ENCODE measurements at regions of chr2 and their contacts with region 1.

Region 1: DNA sequence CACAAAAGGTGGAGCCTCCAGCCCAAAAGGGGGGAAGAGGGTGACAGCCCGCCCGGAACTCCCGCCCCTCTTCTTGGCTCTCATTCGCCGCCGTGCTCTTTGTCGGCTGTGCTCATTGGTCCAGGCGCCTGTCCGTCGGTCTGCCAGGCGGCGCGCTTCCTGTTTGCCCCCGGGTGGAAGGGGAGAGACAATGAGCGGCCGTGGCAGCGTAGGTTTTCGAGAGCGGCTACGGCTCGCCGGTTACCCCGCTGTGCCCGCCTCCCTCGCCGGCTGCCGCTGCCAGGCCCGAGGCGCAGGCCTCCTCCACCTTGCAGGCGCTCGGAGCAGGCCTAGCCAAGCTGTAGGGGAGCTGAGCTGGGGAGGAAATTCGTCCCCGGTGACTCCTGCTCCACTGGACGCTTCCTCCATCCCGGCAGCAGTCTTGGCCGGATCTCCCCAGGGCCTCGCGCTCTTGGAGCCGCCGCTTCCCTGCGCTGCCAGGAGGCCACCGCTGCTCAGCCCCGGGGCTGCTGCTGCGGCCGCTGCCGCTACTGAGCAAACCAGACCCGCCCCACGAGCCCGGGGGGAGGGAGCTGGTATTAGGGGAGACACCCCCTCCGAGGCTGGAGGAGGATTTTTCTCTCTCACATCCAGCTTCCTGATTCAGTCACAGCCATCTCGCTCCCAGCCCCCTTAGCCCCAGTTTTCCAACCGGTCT is at the start of gene SP3:
- DNase-seq: peak; percentile 97
- ATAC-seq: peak; percentile 62
- H3K4me3 ChIP-seq: peak within 1 kb of the TSS; percentile 84 to 98 (median 92)
- H3K4me3 Mint-ChIP-seq: peak within 1 kb of the TSS; percentile 93
- H3K27ac ChIP-seq: peak within 1 kb of the TSS; percentile 94 to 98
- H3K27ac Mint-ChIP-seq: peak within 1 kb of the TSS; percentile 95
- H3K4me1 ChIP-seq: peaks cover 24 to 28% of the 10 kb centered on the region in 2 donors
- H3K4me1 Mint-ChIP-seq: peaks cover 32% of the 10 kb centered on the region
- H3K27me3 ChIP-seq: no peaks in the 10 kb centered on the region
- H3K27me3 Mint-ChIP-seq: no peaks in the 10 kb centered on the region
- CTCF ChIP-seq: no peak
- total RNA-seq, gene SP3: 152 and 164 TPM in 2 replicates

Region 2: GRCh38 chr2:173874894-173875237 is 90.6 kb before region 1 on chr2:
- CTCF ChIA-PET with region 1: no interaction called
- POLR2A ChIA-PET with region 1: interaction called, 3 read pairs
- intact Hi-C with region 1: loop called (anchors 2 kb)
- DNase-seq: peak; percentile 85
- ATAC-seq: peak; percentile 99
- H3K4me3 ChIP-seq: peak overlapping the region in 1 of 5 experiments; percentile 3
- H3K4me3 Mint-ChIP-seq: peak overlapping the region; percentile 89
- H3K27ac ChIP-seq: no peak overlapping the region
- H3K27ac Mint-ChIP-seq: peak overlapping the region; percentile 50
- H3K4me1 ChIP-seq: peaks cover 29 to 32% of the 10 kb centered on the region in 2 donors
- H3K4me1 Mint-ChIP-seq: peaks cover 31% of the 10 kb centered on the region
- H3K27me3 ChIP-seq: peaks cover 0 to 5% (median 1%) of the 10 kb centered on the region in 4 experiments
- H3K27me3 Mint-ChIP-seq: peaks cover 23% of the 10 kb centered on the region
- CTCF ChIP-seq: no peak

Region 3: GRCh38 chr2:173922760-173923159 is 42.7 kb before region 1 on chr2:
- CTCF ChIA-PET with region 1: no interaction called
- POLR2A ChIA-PET with region 1: no interaction called
- intact Hi-C with region 1: loop called (anchors 2 kb)
- DNase-seq: no peak
- ATAC-seq: no peak
- H3K4me3 ChIP-seq: no peak overlapping the region
- H3K4me3 Mint-ChIP-seq: no peak overlapping the region
- H3K27ac ChIP-seq: no peak overlapping the region
- H3K27ac Mint-ChIP-seq: peak overlapping the region; percentile 8
- H3K4me1 ChIP-seq: peaks cover 11 to 15% of the 10 kb centered on the region in 2 donors
- H3K4me1 Mint-ChIP-seq: peaks cover 58% of the 10 kb centered on the region
- H3K27me3 ChIP-seq: no peaks in the 10 kb centered on the region
- H3K27me3 Mint-ChIP-seq: no peaks in the 10 kb centered on the region
- CTCF ChIP-seq: no peak

Region 4: GRCh38 chr2:173997269-173997668 is 31.8 kb after region 1 on chr2:
- CTCF ChIA-PET with region 1: interaction called, 4 read pairs
- POLR2A ChIA-PET with region 1: interaction called, 17 read pairs
- intact Hi-C with region 1: loop called (anchors 1 kb)
- DNase-seq: peak; percentile 86
- ATAC-seq: peak; percentile 100
- H3K4me3 ChIP-seq: no peak overlapping the region
- H3K4me3 Mint-ChIP-seq: peak overlapping the region; percentile 30
- H3K27ac ChIP-seq: peak overlapping the region; percentile 25 to 58
- H3K27ac Mint-ChIP-seq: peak overlapping the region; percentile 84
- H3K4me1 ChIP-seq: peaks cover 21 to 22% of the 10 kb centered on the region in 2 donors
- H3K4me1 Mint-ChIP-seq: peaks cover 30% of the 10 kb centered on the region
- H3K27me3 ChIP-seq: no peaks in the 10 kb centered on the region
- H3K27me3 Mint-ChIP-seq: no peaks in the 10 kb centered on the region
- CTCF ChIP-seq: no peak

Region 5: GRCh38 chr2:174217869-174218268 is 252.4 kb after region 1 on chr2:
- CTCF ChIA-PET with region 1: no interaction called
- POLR2A ChIA-PET with region 1: no interaction called
- intact Hi-C with region 1: no loop called
- DNase-seq: no peak
- ATAC-seq: no peak
- H3K4me3 ChIP-seq: no peak overlapping the region
- H3K4me3 Mint-ChIP-seq: no peak overlapping the region
- H3K27ac ChIP-seq: no peak overlapping the region
- H3K27ac Mint-ChIP-seq: no peak overlapping the region
- H3K4me1 ChIP-seq: no peaks in the 10 kb centered on the region
- H3K4me1 Mint-ChIP-seq: no peaks in the 10 kb centered on the region
- H3K27me3 ChIP-seq: no peaks in the 10 kb centered on the region
- H3K27me3 Mint-ChIP-seq: no peaks in the 10 kb centered on the region
- CTCF ChIP-seq: no peak

Region 6: DNA sequence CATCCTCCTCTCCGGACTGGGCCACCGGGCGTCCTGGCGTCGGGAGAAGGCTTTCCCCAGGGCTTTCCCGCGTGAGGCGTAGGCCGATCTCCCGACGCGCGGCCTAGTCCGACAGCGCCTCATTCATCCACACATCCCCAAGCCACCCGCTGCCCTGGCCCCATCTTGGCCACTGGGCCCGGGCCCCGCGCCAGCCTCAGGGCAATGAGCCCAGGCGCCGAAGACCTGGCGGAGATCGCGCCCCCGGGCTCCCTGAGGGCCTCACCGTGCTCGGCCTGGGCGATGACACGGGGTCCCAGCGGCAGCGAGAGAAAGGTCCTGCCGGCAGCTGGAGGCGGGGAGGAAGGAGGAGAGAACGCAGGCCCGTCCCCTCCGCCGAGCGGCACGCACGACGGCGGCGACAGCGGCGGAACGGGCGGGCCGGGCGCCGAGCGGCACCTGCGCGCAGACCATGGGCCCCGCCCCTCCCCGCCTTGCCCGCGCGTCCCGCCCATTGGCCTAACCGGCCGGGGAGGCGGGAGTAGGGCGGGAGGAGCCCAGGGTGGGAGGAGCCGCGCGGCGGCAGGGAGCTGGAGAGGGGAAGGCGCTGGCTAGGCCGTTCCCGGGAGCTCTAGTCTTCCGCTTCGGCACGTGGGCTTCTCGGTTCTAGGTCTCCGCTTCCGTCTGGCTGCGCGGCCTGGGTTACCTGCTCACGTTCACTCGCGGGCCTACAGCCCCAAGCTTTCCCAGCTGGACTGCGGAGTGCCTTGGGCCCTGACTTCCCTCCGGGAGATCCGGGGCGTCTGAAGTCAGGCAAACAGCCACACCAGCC is 282.9 kb after region 1 on chr2 and contains the start of gene OLA1:
- CTCF ChIA-PET with region 1: interaction called, 3 read pairs
- POLR2A ChIA-PET with region 1: no interaction called
- intact Hi-C with region 1: loop called (anchors 1 kb)
- DNase-seq: peak; percentile 94
- ATAC-seq: peak; percentile 97
- H3K4me3 ChIP-seq: peak within 1 kb of the TSS; percentile 47 to 91 (median 79)
- H3K4me3 Mint-ChIP-seq: peak within 1 kb of the TSS; percentile 91
- H3K27ac ChIP-seq: peak within 1 kb of the TSS; percentile 70 to 87
- H3K27ac Mint-ChIP-seq: peak within 1 kb of the TSS; percentile 85
- H3K4me1 ChIP-seq: peaks cover 12 to 17% of the 10 kb centered on the region in 2 donors
- H3K4me1 Mint-ChIP-seq: peaks cover 23% of the 10 kb centered on the region
- H3K27me3 ChIP-seq: peaks cover 0 to 4% (median 0%) of the 10 kb centered on the region in 4 experiments
- H3K27me3 Mint-ChIP-seq: peaks cover 8% of the 10 kb centered on the region
- CTCF ChIP-seq: no peak
- total RNA-seq, gene OLA1: 44.3 and 47.7 TPM in 2 replicates

Region 7: DNA sequence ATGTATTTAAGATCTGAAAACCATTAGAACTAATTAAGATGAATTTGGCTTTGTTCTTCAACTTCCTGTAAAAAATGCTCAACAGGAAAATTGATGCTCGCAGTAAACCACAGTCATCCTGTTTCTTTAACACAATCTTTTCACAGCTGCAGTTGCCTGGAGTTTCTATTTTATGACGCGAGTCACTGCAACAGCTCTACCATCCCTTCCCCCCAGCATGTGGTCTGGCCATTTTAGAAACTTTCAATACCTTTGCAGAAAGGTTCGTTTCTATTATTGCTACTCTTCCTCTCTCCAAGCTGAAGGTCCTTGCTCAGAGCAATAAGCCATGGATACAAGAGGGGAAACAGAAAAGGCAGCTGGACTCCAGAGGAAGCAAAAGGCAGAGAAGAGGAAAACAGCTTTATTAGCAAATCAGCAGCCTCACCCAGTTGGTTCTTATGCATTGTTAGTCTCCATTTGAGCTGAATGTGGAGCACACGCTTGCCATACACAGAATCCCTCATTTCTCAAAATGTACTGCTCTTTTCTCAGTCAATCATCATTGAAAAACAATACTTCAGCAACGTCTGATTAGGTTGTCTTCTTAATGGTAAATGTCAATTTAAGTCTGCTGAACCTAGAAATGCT is 628.2 kb after region 1 on chr2:
- CTCF ChIA-PET with region 1: no interaction called
- POLR2A ChIA-PET with region 1: no interaction called
- intact Hi-C with region 1: loop called (anchors 10 kb)
- DNase-seq: peak; percentile 88
- ATAC-seq: peak; percentile 66
- H3K4me3 ChIP-seq: peak overlapping the region; percentile 53 to 92 (median 71)
- H3K4me3 Mint-ChIP-seq: peak overlapping the region; percentile 93
- H3K27ac ChIP-seq: peak overlapping the region; percentile 93 to 98
- H3K27ac Mint-ChIP-seq: peak overlapping the region; percentile 96
- H3K4me1 ChIP-seq: peaks cover 63 to 65% of the 10 kb centered on the region in 2 donors
- H3K4me1 Mint-ChIP-seq: peaks cover 65% of the 10 kb centered on the region
- H3K27me3 ChIP-seq: no peaks in the 10 kb centered on the region
- H3K27me3 Mint-ChIP-seq: no peaks in the 10 kb centered on the region
- CTCF ChIP-seq: no peak